ENCODE measurements at regions of chr6 and their contacts with region 1.

Region 1: DNA sequence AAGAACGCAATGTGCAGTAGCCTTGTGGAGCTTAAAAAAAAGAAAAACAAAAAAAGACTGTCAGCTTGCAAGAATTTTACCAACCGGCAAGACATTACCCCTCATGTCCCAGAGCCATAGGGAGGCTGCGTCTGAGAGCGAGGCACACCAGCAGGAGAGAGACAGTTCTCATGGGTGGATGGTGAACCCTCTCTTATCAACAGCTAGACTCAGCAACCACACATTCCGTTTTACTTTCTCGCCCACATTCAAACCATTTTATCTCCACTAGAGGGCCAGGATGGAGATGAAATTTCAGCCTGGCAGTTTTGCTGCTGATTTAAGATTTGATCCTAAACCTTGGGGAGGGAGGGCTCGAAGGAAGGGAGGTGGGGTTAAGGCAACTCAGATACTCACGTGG is 247.0 kb downstream of the ATXN1 start:
- DNase-seq: peak; percentile 45
- H3K4me3 Mint-ChIP-seq: no peak overlapping the region
- H3K27ac Mint-ChIP-seq: peak overlapping the region; percentile 54
- H3K4me1 Mint-ChIP-seq: peaks cover 69% of the 10 kb centered on the region
- H3K27me3 Mint-ChIP-seq: no peaks in the 10 kb centered on the region

Region 2: GRCh38 chr6:16494793-16495192 is 19.5 kb before region 1 on chr6:
- CTCF ChIA-PET with region 1: interaction called, 17 read pairs
- DNase-seq: no peak
- H3K4me3 Mint-ChIP-seq: no peak overlapping the region
- H3K27ac Mint-ChIP-seq: no peak overlapping the region
- H3K4me1 Mint-ChIP-seq: peaks cover 38% of the 10 kb centered on the region
- H3K27me3 Mint-ChIP-seq: no peaks in the 10 kb centered on the region